ENCODE measurements at regions of chr2 and their contacts with region 1.

Region 1: DNA sequence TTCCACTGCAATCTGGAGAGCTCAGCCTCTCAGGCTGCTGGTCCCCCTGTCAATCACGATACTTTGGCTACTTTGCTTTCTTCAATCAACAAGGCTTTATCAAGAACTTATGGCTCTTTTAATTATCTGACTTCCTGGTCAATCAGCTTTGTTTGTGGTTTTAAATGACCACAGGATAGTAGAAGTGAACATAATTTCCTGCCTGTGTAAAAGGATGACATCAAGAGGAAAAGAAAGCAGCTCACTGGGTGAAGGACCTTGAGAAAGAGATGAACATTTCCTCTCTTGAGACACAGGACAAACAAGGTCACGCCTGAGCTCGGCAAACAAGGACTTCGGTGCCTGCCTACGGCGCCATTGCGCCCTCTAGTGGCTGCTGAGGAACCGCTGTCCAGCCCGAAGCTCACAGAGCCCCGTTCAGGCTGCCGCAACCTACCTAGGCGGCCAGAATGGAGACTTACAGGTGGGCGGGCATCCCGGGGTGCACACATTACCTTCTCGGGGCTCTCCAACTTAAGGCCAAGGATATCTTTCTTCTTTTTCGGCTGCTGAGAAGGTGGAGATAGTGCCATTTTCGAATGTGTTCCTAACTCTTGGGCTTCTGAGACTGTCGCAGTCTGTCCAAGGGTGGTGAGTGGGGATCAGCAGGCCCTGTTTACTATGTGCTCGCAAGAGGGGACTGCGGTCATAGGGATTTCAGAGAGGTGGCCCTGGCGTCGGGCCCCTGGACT is 54.0 kb downstream of the IL1RL2 start:
- DNase-seq: peak; percentile 92
- H3K4me3 Mint-ChIP-seq: peak overlapping the region; percentile 5
- H3K27ac Mint-ChIP-seq: peak overlapping the region; percentile 78
- H3K4me1 Mint-ChIP-seq: peaks cover 38% of the 10 kb centered on the region
- H3K27me3 Mint-ChIP-seq: no peaks in the 10 kb centered on the region

Region 2: DNA sequence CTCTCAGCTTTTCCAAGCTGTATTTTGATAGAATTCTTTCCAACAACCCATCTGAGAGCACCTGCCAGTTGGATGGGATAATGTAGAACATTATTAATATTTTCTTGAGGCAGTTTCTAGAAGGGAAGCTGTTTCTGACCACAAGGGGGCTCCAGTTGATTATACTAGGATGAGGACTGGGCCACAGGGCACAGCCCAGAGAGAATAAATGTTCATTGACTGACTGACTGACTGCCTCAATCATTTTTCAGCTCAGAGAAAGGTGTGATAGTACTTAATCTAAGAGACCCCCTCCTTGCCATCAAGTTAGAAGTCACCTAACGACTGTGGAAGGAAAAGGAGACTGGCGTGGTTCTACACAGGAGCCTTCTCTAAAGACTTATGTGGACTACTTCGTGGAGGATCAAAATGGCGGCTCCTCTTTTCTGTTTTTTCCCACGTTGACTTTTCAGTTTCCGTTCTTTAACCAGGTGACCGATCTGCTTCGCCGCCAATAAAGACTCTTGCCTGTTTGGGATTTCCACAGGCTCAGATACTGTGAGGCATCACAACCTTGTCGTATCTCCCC is 821.6 kb before region 1 on chr2:
- CTCF ChIA-PET with region 1: no interaction called
- POLR2A ChIA-PET with region 1: no interaction called
- intact Hi-C with region 1: loop called (anchors 5 kb)
- DNase-seq: peak; percentile 58
- H3K4me3 Mint-ChIP-seq: no peak overlapping the region
- H3K27ac Mint-ChIP-seq: no peak overlapping the region
- H3K4me1 Mint-ChIP-seq: no peaks in the 10 kb centered on the region
- H3K27me3 Mint-ChIP-seq: no peaks in the 10 kb centered on the region

Region 3: DNA sequence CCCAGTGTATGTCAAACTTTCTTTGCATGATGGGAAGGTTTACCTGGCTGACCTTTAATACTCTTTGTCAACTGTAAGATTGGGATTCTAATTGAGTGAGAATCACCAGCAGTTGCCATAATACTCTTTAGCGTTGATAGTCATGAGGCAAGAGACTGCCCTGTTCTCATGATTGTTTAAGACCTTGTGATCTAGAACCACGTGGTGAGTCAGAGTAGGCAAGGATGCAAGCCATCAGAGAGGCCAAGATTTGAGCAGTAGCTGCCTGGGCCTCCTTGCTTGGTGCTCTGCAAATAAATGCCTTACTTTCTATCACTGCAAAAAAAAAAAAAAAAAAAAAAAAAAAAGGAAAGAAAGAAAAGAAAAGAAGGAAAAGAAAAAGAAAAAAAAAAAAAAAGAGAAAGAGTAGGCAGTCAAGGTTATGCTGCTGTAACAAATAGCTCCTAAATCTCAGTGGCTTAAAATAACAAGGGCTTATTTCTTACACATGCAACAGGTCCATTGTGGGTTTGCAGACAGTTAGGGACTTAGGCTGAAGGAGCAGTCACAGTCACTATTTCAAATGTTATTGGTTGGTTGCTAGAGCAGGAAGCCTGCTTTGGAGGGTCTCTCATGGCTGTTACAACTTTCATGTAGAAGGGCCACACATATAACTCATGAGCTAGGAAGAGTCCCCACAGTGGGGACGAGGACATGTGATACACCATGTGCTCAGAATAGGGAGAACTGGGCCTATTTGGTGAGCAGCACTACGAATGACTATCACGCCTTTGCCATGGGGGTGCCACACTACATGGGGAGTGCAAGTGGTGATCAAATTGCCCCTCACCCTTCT is 227.4 kb before region 1 on chr2:
- CTCF ChIA-PET with region 1: interaction called, 148 read pairs
- POLR2A ChIA-PET with region 1: no interaction called
- intact Hi-C with region 1: no loop called
- DNase-seq: peak; percentile 42
- H3K4me3 Mint-ChIP-seq: no peak overlapping the region
- H3K27ac Mint-ChIP-seq: peak overlapping the region; percentile 87
- H3K4me1 Mint-ChIP-seq: peaks cover 49% of the 10 kb centered on the region
- H3K27me3 Mint-ChIP-seq: no peaks in the 10 kb centered on the region

Region 4: DNA sequence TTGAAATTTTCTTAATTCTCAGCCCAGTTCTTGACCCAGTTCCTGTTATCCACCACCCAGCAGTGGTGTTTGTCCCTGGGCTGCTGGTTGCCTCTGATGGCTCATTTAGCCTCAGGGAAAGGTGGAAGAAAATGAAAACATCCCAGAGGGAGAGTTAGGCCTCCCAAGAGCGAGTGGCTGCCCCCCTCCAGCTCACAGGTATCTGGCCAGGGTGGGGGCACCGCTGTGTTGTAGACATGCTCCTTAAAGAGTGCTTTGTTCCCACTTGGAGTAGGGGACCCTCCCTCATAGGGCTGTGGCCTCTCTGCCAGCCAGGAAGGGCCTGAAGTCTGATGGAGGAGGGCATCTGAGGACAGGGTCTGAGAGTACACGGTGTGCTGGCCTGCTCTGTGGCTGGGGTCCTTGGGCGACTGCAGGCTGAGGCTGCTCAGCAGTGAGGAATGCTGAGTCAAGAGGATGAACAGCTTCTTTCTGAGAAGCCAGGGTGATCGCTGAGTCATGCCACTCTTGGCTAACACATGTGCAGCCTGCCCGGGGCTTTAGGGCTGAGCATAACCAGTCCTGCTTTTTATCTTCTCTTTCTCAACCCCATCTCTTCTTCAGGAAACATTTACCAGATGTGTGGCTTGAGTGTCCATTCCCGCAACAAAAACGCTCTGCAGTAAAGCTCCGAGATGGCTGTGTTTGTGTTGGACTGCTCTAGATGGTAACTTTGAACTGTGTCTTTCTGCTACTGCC is 176.7 kb before region 1 on chr2:
- CTCF ChIA-PET with region 1: interaction called, 23 read pairs
- POLR2A ChIA-PET with region 1: interaction called, 8 read pairs
- intact Hi-C with region 1: no loop called
- DNase-seq: peak; percentile 81
- H3K4me3 Mint-ChIP-seq: no peak overlapping the region
- H3K27ac Mint-ChIP-seq: peak overlapping the region; percentile 88
- H3K4me1 Mint-ChIP-seq: peaks cover 44% of the 10 kb centered on the region
- H3K27me3 Mint-ChIP-seq: peaks cover 6% of the 10 kb centered on the region

Region 5: GRCh38 chr2:102138331-102138730 is 102.5 kb before region 1 on chr2:
- CTCF ChIA-PET with region 1: interaction called, 11 read pairs
- POLR2A ChIA-PET with region 1: interaction called, 3 read pairs
- intact Hi-C with region 1: no loop called
- DNase-seq: no peak
- H3K4me3 Mint-ChIP-seq: no peak overlapping the region
- H3K27ac Mint-ChIP-seq: peak overlapping the region; percentile 70
- H3K4me1 Mint-ChIP-seq: peaks cover 59% of the 10 kb centered on the region
- H3K27me3 Mint-ChIP-seq: peaks cover 24% of the 10 kb centered on the region

Region 6: GRCh38 chr2:102251042-102251848 is 10.4 kb after region 1 on chr2:
- CTCF ChIA-PET with region 1: interaction called, 64 read pairs
- POLR2A ChIA-PET with region 1: interaction called, 8 read pairs
- intact Hi-C with region 1: no loop called
- DNase-seq: peak; percentile 83
- H3K4me3 Mint-ChIP-seq: peak overlapping the region; percentile 66
- H3K27ac Mint-ChIP-seq: peak overlapping the region; percentile 64
- H3K4me1 Mint-ChIP-seq: peaks cover 36% of the 10 kb centered on the region
- H3K27me3 Mint-ChIP-seq: no peaks in the 10 kb centered on the region

Region 7: GRCh38 chr2:102449370-102449974 is 208.7 kb after region 1 on chr2:
- CTCF ChIA-PET with region 1: interaction called, 56 read pairs
- POLR2A ChIA-PET with region 1: no interaction called
- intact Hi-C with region 1: no loop called
- DNase-seq: peak; percentile 82
- H3K4me3 Mint-ChIP-seq: no peak overlapping the region
- H3K27ac Mint-ChIP-seq: no peak overlapping the region
- H3K4me1 Mint-ChIP-seq: no peaks in the 10 kb centered on the region
- H3K27me3 Mint-ChIP-seq: peaks cover 1% of the 10 kb centered on the region

Measured in activated CD4-positive, alpha-beta memory T cell treated with anti-CD3 and anti-CD28 coated beads for 36 hours (primary cell).